Activated CD4-positive, alpha-beta T cell treated with anti-CD3 and anti-CD28 coated beads, Interleukin-2, amount 10 ng/mL, durations not matched to agents 7 days and 5 days (primary cell): ENCODE measurements at regions of chr18 and their contacts with region 1.

Region 1: GRCh38 chr18:9762531-9762941 is 54.4 kb downstream of the RAB31 start:
- DNase-seq: no peak
- H3K4me3 Mint-ChIP-seq: no peak overlapping the region
- H3K27ac Mint-ChIP-seq: no peak overlapping the region
- H3K4me1 Mint-ChIP-seq: peaks cover 7% of the 10 kb centered on the region
- H3K27me3 Mint-ChIP-seq: no peaks in the 10 kb centered on the region

Region 2: DNA sequence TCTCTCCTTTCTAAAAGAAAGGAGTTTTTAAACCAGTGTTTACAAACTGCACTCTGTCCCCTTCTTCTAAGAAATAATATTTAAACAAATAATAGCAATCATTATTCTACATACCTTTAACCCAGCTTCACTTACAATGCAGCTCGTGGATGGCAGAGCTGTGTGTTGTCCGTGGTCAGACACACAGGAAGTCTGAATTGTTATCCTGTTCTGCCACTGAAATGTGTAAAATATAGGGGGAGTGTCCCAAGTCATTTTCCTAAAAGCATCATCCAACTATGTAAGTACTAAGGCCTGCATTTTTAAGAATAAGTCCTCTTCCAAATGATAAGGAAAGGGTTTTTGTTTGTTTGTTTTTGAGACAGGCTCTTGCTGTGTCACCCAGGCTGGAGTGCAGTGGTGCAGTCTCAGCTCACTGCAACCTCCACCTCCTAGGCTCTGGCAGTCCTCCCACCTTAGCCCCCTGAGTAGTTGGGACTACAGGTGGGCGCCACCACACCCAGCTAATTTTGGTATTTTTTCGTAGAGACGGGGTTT is 145.5 kb before region 1 on chr18:
- CTCF ChIA-PET with region 1: no interaction called
- POLR2A ChIA-PET with region 1: interaction called, 13 read pairs
- DNase-seq: no peak
- H3K4me3 Mint-ChIP-seq: no peak overlapping the region
- H3K27ac Mint-ChIP-seq: no peak overlapping the region
- H3K4me1 Mint-ChIP-seq: peaks cover 46% of the 10 kb centered on the region
- H3K27me3 Mint-ChIP-seq: peaks cover 10% of the 10 kb centered on the region

Region 3: DNA sequence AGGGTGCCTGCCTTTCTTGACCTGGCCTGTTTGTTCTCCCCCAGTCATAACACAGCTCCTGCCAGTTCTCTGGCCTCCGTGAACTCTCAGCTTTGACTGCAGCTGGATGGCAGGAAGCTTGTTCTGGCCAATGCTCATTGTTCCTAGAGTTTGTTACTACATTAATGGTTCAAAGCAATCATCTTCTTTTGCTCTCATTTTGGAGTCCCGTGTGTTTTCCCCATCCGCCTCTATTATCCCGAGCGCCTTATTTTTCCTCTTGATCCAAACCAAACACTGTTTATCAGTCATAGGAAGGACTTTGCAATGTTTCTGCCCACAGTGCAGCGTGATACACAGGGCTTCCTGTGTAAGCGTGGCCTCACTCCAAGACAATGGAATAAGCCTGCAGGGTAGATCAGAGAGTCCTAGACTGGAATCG is 507.6 kb after region 1 on chr18:
- CTCF ChIA-PET with region 1: no interaction called
- POLR2A ChIA-PET with region 1: no interaction called
- DNase-seq: no peak
- H3K4me3 Mint-ChIP-seq: no peak overlapping the region
- H3K27ac Mint-ChIP-seq: no peak overlapping the region
- H3K4me1 Mint-ChIP-seq: no peaks in the 10 kb centered on the region
- H3K27me3 Mint-ChIP-seq: no peaks in the 10 kb centered on the region